Pancreas (tissue), 10 donors: ENCODE measurements at regions of chr1 and their contacts with region 1.

Region 1: GRCh38 chr1:165768513-165769394 is at the start of gene TMCO1:
- DNase-seq: peak; percentile 82 to 96 (median 94)
- ATAC-seq: peak; percentile 99 to 100 (median 100)
- H3K4me3 ChIP-seq: peak within 1 kb of the TSS; percentile 50 to 79 (median 71)
- H3K27ac ChIP-seq: peak within 1 kb of the TSS; percentile 70 to 83 (median 80)
- H3K4me1 ChIP-seq: peaks cover 3 to 24% (median 9%) of the 10 kb centered on the region in 3 donors
- H3K27me3 ChIP-seq: no peaks in the 10 kb centered on the region
- CTCF ChIP-seq: no peak
- total RNA-seq, gene TMCO1: 28.0 to 53.5 (median 43.4) TPM

Region 2: GRCh38 chr1:165707984-165708706 is 60.6 kb before region 1 on chr1:
- intact Hi-C with region 1: no loop called
- DNase-seq: no peak
- ATAC-seq: no peak
- H3K4me3 ChIP-seq: no peak overlapping the region
- H3K27ac ChIP-seq: no peak overlapping the region
- H3K4me1 ChIP-seq: no peaks in the 10 kb centered on the region
- H3K27me3 ChIP-seq: no peaks in the 10 kb centered on the region
- CTCF ChIP-seq: no peak

Region 3: DNA sequence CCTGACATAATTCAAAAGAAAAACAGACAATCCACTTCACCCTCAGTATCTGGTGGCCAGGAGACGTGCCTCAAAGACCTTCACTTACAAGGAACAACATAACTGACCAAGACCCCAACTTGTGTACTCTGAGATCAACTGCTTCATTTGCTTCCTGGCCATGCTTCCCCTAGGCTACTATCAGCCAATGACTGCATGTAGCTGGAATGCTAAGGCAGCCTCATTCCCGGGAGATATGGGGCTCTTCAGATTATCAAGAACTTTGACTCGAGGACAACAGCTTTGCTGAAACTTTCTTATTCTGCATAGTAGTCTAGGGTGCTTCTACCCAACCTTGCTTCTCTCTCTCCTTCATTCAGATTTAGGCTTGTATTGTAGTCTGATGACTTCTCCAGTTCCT is 47.0 kb after region 1 on chr1:
- intact Hi-C with region 1: no loop called
- DNase-seq: no peak
- ATAC-seq: no peak
- H3K4me3 ChIP-seq: no peak overlapping the region
- H3K27ac ChIP-seq: no peak overlapping the region
- H3K4me1 ChIP-seq: no peaks in the 10 kb centered on the region
- H3K27me3 ChIP-seq: no peaks in the 10 kb centered on the region
- CTCF ChIP-seq: no peak

Region 4: DNA sequence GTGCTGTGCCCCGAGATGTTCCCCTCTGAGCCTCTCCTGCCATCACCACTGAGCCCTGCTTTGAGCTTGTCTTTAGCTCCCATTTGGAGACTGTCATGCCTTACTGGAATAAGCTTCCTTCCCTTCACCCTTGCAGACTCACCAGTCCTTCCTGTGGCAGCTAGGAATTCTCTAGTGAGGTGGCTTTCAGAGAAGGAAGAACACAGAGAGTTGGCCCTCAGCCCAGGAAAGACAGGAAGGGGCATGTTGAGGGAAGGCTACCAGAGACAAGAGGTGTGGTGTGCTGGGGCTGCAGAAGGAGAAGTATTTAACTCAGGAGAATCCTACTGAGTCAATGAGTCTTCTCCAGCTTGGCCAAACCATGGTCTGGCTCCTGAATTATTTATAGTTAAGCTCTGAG is 134.9 kb after region 1 on chr1:
- intact Hi-C with region 1: loop called in 1 of 3 experiments (anchors 10 kb)
- DNase-seq: no peak
- ATAC-seq: peak in 1 of 4 donors; percentile 23
- H3K4me3 ChIP-seq: no peak overlapping the region
- H3K27ac ChIP-seq: no peak overlapping the region
- H3K4me1 ChIP-seq: peaks cover 12 to 20% (median 18%) of the 10 kb centered on the region in 3 donors
- H3K27me3 ChIP-seq: no peaks in the 10 kb centered on the region
- CTCF ChIP-seq: no peak

Region 5: DNA sequence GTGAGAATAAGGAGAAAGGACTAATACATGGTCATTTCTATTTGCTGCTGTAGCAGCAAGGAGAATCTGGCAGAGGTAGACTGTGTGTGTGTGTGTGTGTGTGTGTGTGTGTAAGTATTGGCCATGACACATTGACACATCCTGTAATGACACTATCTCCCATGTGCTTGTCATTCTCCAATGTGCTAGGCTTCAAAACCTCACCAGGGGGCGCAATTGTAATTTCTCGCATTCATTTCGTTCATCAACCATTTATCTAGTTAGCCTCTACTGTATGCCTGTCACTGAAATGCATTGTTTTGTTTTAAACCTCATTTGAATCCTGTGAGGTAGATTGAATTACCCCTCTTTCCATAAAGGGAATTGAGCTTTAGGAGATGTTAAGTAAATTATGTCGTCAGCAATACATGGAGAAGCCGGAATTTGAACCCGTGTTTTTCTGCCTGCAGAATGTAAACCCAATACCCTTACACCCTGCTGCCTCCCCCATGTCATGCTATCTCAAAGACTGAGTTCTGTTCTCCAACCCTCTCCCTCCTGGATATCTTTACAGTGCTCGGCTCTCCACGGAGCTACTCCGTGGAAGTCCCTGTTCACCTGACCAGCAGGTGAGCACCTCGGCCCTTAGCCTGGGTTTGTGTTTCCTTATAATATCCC is 159.4 kb after region 1 on chr1:
- intact Hi-C with region 1: no loop called
- DNase-seq: peak in 1 of 6 donors; percentile 35
- ATAC-seq: peak in 3 of 4 donors; percentile 59 to 66 (median 61)
- H3K4me3 ChIP-seq: no peak overlapping the region
- H3K27ac ChIP-seq: no peak overlapping the region
- H3K4me1 ChIP-seq: no peaks in the 10 kb centered on the region
- H3K27me3 ChIP-seq: no peaks in the 10 kb centered on the region
- CTCF ChIP-seq: peak in 3 of 4 donors; percentile 28 to 47 (median 35)